ENCODE measurements at regions of chr1 and their contacts with region 1.

Region 1: DNA sequence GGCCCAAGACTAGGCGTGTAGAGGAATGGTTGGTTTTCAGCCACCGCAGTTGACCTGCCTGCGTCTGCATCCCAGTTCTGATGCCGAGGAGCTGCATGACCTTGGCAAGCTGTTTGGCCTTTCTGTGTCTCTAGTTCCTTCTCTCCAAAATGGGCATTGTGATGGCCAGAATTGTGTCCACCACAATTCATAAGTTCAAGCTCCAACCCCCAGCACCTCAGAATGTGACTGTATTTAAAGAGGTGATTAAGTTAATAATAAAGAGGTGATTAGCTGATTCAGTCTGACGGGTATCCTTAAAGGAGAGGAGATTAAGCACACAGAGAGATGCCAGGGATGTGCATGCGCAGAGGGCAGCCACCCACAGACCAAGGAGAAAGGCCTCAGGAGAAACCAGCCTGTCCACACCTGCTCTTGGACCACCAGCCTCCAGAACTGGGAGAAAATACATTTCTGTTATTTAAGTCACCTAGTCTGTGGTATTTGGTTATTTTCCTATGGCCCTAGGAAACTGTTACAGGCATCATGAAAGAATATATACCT is 28.5 kb downstream of the MAB21L3 start:
- DNase-seq: no peak
- H3K4me3 ChIP-seq: no peak overlapping the region
- CTCF ChIP-seq: no peak

Region 2: GRCh38 chr1:116092752-116093482 is 46.7 kb before region 1 on chr1:
- CTCF ChIA-PET with region 1: no interaction called
- POLR2A ChIA-PET with region 1: no interaction called
- DNase-seq: no peak
- H3K4me3 ChIP-seq: no peak overlapping the region
- CTCF ChIP-seq: no peak

Region 3: GRCh38 chr1:116122955-116123757 is 16.5 kb before region 1 on chr1:
- CTCF ChIA-PET with region 1: interaction called, 26 read pairs
- POLR2A ChIA-PET with region 1: no interaction called
- DNase-seq: peak; percentile 54
- H3K4me3 ChIP-seq: no peak overlapping the region
- CTCF ChIP-seq: no peak

Region 4: GRCh38 chr1:116128664-116129063 is 11.0 kb before region 1 on chr1:
- CTCF ChIA-PET with region 1: interaction called, 26 read pairs
- POLR2A ChIA-PET with region 1: no interaction called
- DNase-seq: no peak
- H3K4me3 ChIP-seq: no peak overlapping the region
- CTCF ChIP-seq: no peak

Region 5: DNA sequence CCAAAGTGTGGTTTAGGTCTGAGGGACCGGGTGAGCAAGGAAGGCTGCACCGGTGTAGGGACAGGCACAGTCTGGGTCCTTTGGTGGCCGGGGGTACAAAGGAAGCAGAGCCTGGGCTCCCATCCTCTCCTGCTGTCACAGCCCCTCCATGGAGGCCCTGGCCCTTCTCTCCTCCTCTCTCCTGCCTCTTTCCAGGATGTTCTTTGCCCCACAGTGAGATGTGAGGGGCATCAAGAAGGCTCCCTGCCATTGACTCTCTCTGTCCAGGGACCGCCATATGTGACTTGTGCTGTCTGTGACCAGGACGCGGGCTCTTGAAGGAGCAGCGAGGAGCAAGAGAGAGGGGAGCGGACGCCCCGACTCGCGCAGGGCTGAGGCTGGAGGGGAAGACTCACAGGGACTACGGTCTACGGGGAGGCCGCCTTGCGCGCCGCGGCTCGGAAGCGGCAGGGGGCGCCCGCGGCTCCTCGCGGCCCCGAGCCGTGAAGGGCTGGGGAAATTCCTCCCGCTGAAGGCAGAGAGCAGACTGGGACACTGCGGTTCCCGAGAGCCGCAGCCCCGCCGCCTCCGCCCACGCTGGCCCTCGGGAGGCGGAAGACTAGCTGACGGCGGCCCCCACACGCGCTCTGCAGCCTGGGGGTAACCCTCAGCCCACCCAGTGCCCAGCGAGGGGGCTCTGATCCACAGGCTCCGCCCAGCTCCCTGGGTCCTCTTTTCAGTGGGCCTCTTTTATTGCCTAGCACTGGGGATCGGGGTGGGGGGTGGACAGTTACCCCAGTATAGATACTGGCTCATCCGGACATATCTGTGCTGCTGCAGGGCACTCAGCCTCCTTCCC is 12.3 kb after region 1 on chr1:
- CTCF ChIA-PET with region 1: interaction called, 76 read pairs
- POLR2A ChIA-PET with region 1: no interaction called
- DNase-seq: no peak
- H3K4me3 ChIP-seq: peak overlapping the region; percentile 57
- CTCF ChIP-seq: peak; percentile 84

Region 6: GRCh38 chr1:116168277-116169097 is 28.8 kb after region 1 on chr1:
- CTCF ChIA-PET with region 1: interaction called, 10 read pairs
- POLR2A ChIA-PET with region 1: no interaction called
- DNase-seq: no peak
- H3K4me3 ChIP-seq: peak overlapping the region; percentile 55
- CTCF ChIP-seq: peak; percentile 82

Region 7: DNA sequence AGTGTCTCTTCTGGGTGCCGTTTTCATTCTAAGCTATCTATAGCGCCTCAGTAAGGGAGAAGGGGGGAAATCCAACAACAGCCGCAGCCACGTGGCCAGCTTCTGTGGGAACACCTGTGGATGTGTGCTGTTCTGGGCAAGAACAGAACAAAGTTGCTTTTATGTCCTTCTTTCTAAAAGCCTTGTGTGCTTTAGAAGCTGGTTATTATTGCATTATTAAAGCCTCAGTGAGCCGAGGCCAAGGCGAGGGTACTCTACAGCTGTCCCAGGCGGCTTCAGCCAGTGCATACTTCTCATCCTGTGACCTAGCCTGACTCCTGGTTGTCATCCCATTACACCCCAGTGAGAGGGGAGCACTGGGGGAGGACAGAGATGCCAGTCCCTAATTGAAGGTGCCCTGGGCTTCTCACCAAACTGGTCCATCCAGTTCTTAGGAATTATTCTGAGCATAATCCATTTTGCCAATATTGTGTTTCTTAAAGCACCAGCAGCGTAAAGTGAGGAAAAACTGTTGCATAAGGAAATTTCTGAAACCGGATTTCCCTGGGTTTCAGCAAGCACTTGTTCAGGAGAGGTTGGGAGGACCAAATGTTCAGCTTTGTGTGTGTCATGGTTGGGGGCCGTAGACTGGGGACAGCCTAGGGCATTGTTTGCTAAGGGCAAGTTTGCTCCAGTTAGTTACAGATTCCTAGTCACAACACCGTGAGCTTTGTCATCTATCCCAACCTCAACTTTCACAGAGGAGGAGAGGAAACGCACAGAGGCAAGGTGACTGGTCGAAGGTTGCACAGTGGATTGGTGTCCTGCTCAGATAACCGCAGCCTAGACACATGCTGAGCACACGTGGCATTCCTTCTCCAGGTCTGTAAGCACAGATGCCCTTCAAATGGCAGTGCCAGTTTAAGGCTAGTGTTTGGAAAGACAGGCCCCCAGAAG is 172.4 kb after region 1 on chr1:
- CTCF ChIA-PET with region 1: no interaction called
- POLR2A ChIA-PET with region 1: no interaction called
- DNase-seq: no peak
- H3K4me3 ChIP-seq: no peak overlapping the region
- CTCF ChIP-seq: no peak

Region 8: GRCh38 chr1:116570358-116571200 is 430.9 kb after region 1 on chr1 and contains the start of gene CD58:
- CTCF ChIA-PET with region 1: interaction called, 10 read pairs
- POLR2A ChIA-PET with region 1: no interaction called
- DNase-seq: no peak
- H3K4me3 ChIP-seq: peak within 1 kb of the TSS; percentile 73
- CTCF ChIP-seq: peak; percentile 79